ENCODE measurements at regions of chr1 and their contacts with region 1.

Region 1: DNA sequence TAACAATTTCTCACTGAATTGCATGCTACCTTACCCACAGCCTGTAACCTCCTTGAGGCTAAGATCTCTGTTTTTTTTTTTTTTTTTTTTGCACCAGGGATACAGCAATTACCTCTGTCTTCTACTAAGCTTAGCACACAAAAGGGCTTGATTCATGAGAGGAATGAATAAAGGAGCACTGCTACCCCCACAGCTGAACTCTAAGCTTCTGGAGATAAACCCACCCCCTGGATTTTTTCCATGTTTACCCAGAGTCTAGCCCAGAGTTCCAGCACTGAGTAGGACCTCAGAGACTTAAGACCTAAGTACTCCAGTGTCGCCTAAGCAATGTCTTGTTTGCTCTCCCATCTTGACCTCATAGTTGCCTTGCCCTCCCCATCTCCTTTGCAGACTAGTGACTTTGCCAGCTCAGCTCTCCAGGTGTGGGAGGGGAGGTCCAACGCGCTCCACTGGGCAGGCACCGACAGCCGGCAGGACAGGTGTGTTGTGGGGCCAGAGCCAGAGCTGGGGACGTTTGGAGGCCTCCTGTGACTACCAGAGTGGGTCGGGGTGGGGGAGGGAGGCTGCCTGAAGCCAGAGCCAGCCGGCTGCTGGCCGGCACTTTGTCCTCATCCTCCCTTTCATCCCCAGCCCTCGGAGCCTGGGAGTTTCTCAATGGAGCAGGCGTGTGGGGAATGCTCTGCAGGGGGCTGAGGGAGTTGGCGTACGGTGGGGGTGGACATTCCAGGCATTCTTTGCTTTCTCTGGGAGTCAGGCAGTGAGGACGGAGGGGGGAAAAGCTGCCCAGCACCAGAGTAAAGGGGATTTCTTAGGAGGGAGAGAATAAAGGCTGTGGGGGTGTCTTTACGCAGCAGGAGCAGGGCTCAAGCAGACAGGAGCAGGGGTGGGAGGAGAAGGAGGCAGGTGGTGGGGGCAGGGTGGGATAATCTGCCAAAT is 20.4 kb downstream of the NUAK2 start:
- DNase-seq: no peak
- ATAC-seq: peak; percentile 66
- H3K4me3 ChIP-seq: peak overlapping the region in 1 of 2 experiments; percentile 14; a peak in 2 of 4 replicates
- H3K27ac ChIP-seq: peak overlapping the region; percentile 82
- H3K4me1 ChIP-seq: peaks cover 48% of the 10 kb centered on the region
- H3K27me3 ChIP-seq: no peaks in the 10 kb centered on the region
- CTCF ChIP-seq: no peak

Region 2: DNA sequence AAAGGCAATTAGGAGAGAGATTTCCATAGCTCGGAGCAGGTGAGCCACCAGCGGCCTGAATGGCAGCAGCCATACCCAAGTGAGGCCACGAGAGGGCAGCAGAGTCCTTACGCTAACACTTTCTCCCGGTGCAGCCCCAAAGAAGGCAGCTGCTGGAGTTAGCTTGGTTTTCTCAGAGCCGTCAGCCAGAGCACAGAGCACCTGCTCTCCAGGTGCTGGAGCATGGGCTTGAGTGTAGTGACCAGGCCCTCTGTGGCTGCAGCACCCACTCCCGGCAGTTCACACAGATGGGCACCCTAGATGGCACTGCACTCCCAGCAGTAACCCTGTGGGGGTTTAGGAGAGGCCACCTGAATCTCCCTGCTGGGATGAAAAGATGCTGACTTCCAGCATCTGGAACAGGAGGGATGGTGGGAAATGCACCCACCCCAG is 27.6 kb before region 1 on chr1:
- CTCF ChIA-PET with region 1: interaction called, 4 read pairs
- POLR2A ChIA-PET with region 1: interaction called, 3 read pairs
- in situ Hi-C with region 1: no loop called
- intact Hi-C with region 1: loop called (anchors 2 kb)
- DNase-seq: peak; percentile 76
- ATAC-seq: peak; percentile 82
- H3K4me3 ChIP-seq: no peak overlapping the region
- H3K27ac ChIP-seq: peak overlapping the region; percentile 56
- H3K4me1 ChIP-seq: peaks cover 34% of the 10 kb centered on the region
- H3K27me3 ChIP-seq: no peaks in the 10 kb centered on the region
- CTCF ChIP-seq: peak; percentile 97